ENCODE measurements at regions of chr10 and their contacts with region 1.

Region 1: DNA sequence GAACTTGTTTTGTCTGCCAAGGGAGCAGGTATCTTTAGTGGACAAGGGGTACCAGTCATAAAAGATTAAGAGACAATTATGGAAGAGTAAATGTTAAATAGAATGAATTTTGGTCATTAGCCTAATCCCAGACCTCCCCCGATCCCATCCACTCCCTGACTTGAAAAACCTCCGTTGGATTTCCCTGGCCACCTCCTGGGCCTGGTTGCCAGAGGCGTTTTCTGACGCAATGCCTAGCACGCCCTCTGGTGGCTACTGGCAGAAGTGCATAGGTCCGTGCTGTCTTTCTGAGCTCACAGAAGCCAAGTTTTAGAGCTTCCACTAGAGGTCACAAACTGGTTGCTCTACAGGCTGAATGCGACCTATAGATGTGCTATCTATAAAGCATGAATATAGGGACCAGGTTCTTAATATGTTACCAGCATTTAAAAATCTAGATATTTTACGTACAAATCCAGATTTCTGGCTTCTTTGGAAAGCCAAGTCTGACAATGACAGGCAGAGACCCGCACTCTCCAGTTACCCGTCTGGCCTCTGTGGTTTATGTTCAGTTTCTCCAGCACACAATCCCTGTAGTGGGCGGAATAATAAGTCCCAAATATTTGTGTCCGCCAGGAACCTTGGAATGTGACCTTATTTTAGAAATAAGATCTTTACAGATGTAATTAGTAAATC is 39.8 kb downstream of the SPOCK2 start:
- DNase-seq: peak; percentile 94
- H3K4me3 ChIP-seq: no peak overlapping the region
- H3K27ac ChIP-seq: no peak overlapping the region
- H3K4me1 ChIP-seq: no peaks in the 10 kb centered on the region
- H3K27me3 ChIP-seq: no peaks in the 10 kb centered on the region
- CTCF ChIP-seq: peak; percentile 100

Region 2: DNA sequence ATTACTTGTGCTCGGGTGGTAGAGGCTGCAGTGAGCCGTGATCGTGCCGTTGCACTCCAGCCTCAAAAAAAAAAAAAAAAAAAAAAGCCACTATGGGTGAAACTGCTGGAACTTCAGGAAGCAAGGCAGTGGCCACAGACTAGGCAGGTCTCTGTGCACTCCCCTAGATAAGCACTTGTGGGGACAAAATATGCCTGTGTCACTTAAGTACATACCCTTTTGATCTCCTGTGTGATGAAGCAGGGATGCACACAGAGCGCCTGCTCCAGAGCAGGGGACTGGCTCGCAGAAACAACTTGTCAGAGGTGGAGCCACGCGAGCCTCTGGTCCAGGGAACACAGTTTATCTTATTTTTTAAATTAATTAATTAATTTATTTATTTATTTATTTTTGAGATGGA is 154.7 kb before region 1 on chr10:
- CTCF ChIA-PET with region 1: interaction called, 25 read pairs
- POLR2A ChIA-PET with region 1: no interaction called
- intact Hi-C with region 1: loop called (anchors 5 kb)
- DNase-seq: no peak
- H3K4me3 ChIP-seq: no peak overlapping the region
- H3K27ac ChIP-seq: no peak overlapping the region
- H3K4me1 ChIP-seq: peaks cover 3% of the 10 kb centered on the region
- H3K27me3 ChIP-seq: no peaks in the 10 kb centered on the region
- CTCF ChIP-seq: no peak

Region 3: GRCh38 chr10:71899665-71900412 is 148.7 kb before region 1 on chr10:
- CTCF ChIA-PET with region 1: interaction called, 25 read pairs
- POLR2A ChIA-PET with region 1: no interaction called
- intact Hi-C with region 1: loop called (anchors 5 kb)
- DNase-seq: no peak
- H3K4me3 ChIP-seq: no peak overlapping the region
- H3K27ac ChIP-seq: no peak overlapping the region
- H3K4me1 ChIP-seq: no peaks in the 10 kb centered on the region
- H3K27me3 ChIP-seq: no peaks in the 10 kb centered on the region
- CTCF ChIP-seq: no peak

Region 4: GRCh38 chr10:71957546-71958275 is 90.9 kb before region 1 on chr10:
- CTCF ChIA-PET with region 1: interaction called, 19 read pairs
- POLR2A ChIA-PET with region 1: no interaction called
- intact Hi-C with region 1: loop called (anchors 5 kb)
- DNase-seq: peak; percentile 37
- H3K4me3 ChIP-seq: no peak overlapping the region
- H3K27ac ChIP-seq: no peak overlapping the region
- H3K4me1 ChIP-seq: no peaks in the 10 kb centered on the region
- H3K27me3 ChIP-seq: no peaks in the 10 kb centered on the region
- CTCF ChIP-seq: peak; percentile 41; the same call in 1 of the 2 replicates

Region 5: DNA sequence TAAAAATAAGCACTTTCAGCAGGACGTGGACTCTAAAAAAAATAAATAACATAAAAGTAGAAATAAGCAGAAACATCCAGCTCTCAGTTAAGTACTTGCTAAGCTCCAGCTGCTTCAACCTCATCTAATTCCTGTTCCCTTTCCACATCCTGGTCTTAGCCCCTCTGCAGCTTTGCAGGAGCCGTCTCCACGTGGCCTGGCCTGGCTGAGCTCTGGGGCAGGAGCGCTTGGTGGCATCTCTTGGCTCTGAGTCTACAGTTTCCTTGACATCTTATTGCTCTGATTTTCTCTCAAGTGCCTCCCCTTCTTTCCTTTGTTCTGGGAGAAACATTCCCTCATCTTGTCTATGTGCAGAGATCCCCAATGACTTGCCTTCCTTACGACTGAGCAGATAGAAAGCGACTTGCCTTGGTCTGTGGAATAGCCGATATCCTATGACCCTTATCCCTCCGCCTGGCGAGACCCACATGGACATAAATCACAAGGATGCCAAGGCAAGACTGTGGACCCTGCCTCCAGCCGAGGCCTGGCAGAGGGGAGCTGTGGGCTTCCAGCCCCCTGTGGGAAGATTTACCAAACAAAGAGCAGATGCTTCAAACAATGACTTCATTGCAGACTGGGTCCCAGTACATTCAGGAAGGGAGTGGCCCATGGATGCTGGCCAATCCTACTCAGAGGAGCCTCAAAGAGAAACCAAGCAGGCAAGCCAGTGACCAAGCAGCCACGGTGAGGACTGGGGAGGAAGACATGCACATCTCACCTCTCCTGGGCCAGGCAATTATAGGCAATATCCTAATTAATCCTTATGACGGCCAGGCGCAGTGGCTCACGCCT is 22.1 kb before region 1 on chr10:
- CTCF ChIA-PET with region 1: interaction called, 19 read pairs
- POLR2A ChIA-PET with region 1: no interaction called
- intact Hi-C with region 1: no loop called
- DNase-seq: no peak
- H3K4me3 ChIP-seq: no peak overlapping the region
- H3K27ac ChIP-seq: no peak overlapping the region
- H3K4me1 ChIP-seq: no peaks in the 10 kb centered on the region
- H3K27me3 ChIP-seq: no peaks in the 10 kb centered on the region
- CTCF ChIP-seq: no peak

Region 6: GRCh38 chr10:72223743-72224101 is 175.1 kb after region 1 on chr10:
- CTCF ChIA-PET with region 1: no interaction called
- POLR2A ChIA-PET with region 1: no interaction called
- intact Hi-C with region 1: loop called (anchors 5 kb)
- DNase-seq: no peak
- H3K4me3 ChIP-seq: no peak overlapping the region
- H3K27ac ChIP-seq: peak overlapping the region; percentile 18
- H3K4me1 ChIP-seq: peaks cover 31% of the 10 kb centered on the region
- H3K27me3 ChIP-seq: no peaks in the 10 kb centered on the region
- CTCF ChIP-seq: no peak

Region 7: GRCh38 chr10:72331601-72332422 is 283.2 kb after region 1 on chr10:
- CTCF ChIA-PET with region 1: interaction called, 4 read pairs
- POLR2A ChIA-PET with region 1: no interaction called
- intact Hi-C with region 1: loop called (anchors 5 kb)
- DNase-seq: peak; percentile 91
- H3K4me3 ChIP-seq: no peak overlapping the region
- H3K27ac ChIP-seq: peak overlapping the region; percentile 80
- H3K4me1 ChIP-seq: peaks cover 38% of the 10 kb centered on the region
- H3K27me3 ChIP-seq: no peaks in the 10 kb centered on the region
- CTCF ChIP-seq: no peak

Measured in A673 (cell line).